ENCODE measurements at regions of chr1 and their contacts with region 1.

Region 1: GRCh38 chr1:173429471-173430402 is 47.4 kb upstream of the PRDX6 start:
- DNase-seq: peak; percentile 89 to 95 (median 91)
- ATAC-seq: peak; percentile 92 to 98 (median 98)
- H3K4me3 ChIP-seq: peak overlapping the region in 9 of 12 donors; percentile 22 to 42 (median 36)
- H3K27ac ChIP-seq: peak overlapping the region; percentile 79 to 94 (median 87)
- H3K4me1 ChIP-seq: peaks cover 0 to 36% (median 26%) of the 10 kb centered on the region in 12 donors
- H3K27me3 ChIP-seq: no peaks in the 10 kb centered on the region
- CTCF ChIP-seq: peak; percentile 40 to 77 (median 64)
- POLR2A ChIP-seq: peak in 1 of 2 donors; percentile 29

Region 2: GRCh38 chr1:172745014-172745413 is 684.7 kb before region 1 on chr1:
- intact Hi-C with region 1: loop called in 2 of 10 experiments (anchors 10 kb)
- DNase-seq: no peak
- ATAC-seq: peak; percentile 50 to 82 (median 78)
- H3K4me3 ChIP-seq: no peak overlapping the region
- H3K27ac ChIP-seq: no peak overlapping the region
- H3K4me1 ChIP-seq: peaks cover 0 to 26% (median 3%) of the 10 kb centered on the region in 12 donors
- H3K27me3 ChIP-seq: peaks cover 0 to 15% (median 0%) of the 10 kb centered on the region in 9 donors
- CTCF ChIP-seq: peak; percentile 25 to 64 (median 56)
- POLR2A ChIP-seq: no peak

Region 3: DNA sequence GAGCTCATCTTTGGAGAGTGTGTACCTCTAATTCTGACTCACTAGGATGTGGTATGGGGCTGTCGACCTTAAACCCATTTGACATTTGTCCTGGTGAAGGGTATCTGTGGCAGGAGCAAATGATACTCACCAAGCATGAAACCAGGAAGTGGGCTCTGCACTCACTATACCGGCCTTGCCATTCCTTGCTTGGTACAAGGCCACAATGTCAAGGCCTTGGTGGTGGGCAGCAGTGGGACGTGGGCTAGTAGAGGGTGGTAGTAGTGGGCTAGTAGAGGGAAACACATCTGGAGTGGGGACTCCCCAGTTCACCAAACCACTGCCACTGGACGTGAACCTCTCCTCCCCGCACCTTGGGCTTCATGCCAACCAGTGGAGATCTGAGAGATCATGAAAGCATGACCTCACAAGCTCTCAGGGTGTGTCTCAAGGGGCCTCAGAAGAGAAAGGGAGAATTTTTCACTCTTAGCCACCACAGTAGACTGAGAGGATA is 234.1 kb before region 1 on chr1:
- intact Hi-C with region 1: no loop called
- DNase-seq: no peak
- ATAC-seq: no peak
- H3K4me3 ChIP-seq: no peak overlapping the region
- H3K27ac ChIP-seq: no peak overlapping the region
- H3K4me1 ChIP-seq: peaks cover 0 to 12% (median 7%) of the 10 kb centered on the region in 12 donors
- H3K27me3 ChIP-seq: no peaks in the 10 kb centered on the region
- CTCF ChIP-seq: no peak
- POLR2A ChIP-seq: no peak

Region 4: DNA sequence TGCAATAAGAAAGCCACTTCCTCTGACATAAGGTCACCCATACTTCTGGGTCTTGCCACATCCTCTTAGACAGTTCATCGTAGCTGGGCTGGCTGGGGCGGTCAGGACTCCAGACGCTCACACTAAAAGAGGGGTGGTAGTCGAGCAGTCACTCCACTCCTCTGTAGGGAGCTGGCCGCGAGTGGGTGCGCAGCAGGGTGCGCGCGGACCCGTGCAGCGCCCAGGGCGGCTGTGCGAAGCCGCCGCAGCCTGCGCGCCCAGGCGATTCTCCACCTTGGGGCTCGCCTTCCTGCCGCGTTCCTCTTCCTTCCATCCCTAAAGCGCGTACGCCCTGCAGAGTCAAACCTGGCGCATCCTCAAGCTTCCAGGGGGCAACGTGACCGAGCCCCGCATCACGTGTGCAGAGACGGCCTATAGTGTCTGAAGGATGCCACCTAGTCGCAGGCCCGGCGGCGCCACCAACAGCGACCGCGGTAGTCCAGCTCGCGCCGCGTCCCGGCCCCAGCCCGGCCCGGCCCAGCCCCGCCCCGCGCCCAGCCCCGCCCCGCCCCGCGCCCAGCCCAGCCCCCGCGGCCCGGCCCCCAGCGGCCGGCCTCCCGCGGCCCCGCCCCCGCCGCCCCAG is 47.0 kb after region 1 on chr1:
- intact Hi-C with region 1: loop called in 9 of 10 experiments (anchors 1 to 10 kb)
- DNase-seq: peak; percentile 92 to 97 (median 94)
- ATAC-seq: peak; percentile 88 to 92 (median 91)
- H3K4me3 ChIP-seq: peak overlapping the region; percentile 52 to 96 (median 79)
- H3K27ac ChIP-seq: peak overlapping the region; percentile 66 to 99 (median 96)
- H3K4me1 ChIP-seq: peaks cover 0 to 61% (median 50%) of the 10 kb centered on the region in 12 donors
- H3K27me3 ChIP-seq: no peaks in the 10 kb centered on the region
- CTCF ChIP-seq: peak in 4 of 12 donors; percentile 15 to 32 (median 24)
- POLR2A ChIP-seq: peak in 1 of 2 donors; percentile 30

Region 5: GRCh38 chr1:173489149-173489934 is 59.6 kb after region 1 on chr1:
- intact Hi-C with region 1: no loop called
- DNase-seq: no peak
- ATAC-seq: peak in 1 of 4 donors; percentile 13
- H3K4me3 ChIP-seq: no peak overlapping the region
- H3K27ac ChIP-seq: no peak overlapping the region
- H3K4me1 ChIP-seq: no peaks in the 10 kb centered on the region
- H3K27me3 ChIP-seq: no peaks in the 10 kb centered on the region
- CTCF ChIP-seq: no peak
- POLR2A ChIP-seq: no peak

Region 6: DNA sequence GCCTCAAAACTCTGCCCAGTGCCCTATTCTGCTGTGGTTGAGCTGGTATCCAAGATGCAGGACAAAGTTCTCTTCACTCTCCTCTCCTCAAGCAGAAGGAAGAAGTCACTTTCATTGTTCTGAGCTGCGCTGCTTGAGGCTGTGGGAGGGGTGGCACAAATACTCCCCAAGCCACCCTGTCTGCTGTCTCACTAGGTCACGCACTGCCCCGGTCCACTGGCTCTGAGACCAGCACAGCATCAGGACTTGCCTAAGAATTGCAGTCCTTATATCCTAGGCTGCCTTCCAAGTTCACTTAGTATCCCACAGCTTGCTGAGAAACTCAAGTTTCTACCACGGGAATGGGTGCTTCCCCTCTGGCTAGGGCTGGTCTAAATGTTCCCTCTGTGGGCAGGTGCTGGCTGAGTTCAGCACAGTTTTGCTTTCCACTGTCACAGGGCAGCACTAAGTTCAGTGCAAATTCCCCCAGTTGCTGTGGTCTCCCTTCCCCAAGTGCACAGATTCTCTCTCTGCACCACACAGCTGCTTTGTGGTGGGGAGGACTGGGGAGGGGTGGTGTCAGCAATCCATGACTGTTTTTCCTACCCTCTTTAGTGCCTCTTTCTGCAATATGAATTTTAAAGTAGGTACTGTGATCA is 140.8 kb after region 1 on chr1:
- intact Hi-C with region 1: no loop called
- DNase-seq: no peak
- ATAC-seq: no peak
- H3K4me3 ChIP-seq: no peak overlapping the region
- H3K27ac ChIP-seq: no peak overlapping the region
- H3K4me1 ChIP-seq: no peaks in the 10 kb centered on the region
- H3K27me3 ChIP-seq: no peaks in the 10 kb centered on the region
- CTCF ChIP-seq: no peak
- POLR2A ChIP-seq: no peak

Region 7: GRCh38 chr1:173603056-173603620 is 173.4 kb after region 1 on chr1 and contains the start of gene SLC9C2:
- intact Hi-C with region 1: loop called in 1 of 10 experiments (anchors 10 kb)
- DNase-seq: peak in 1 of 5 donors; percentile 28
- ATAC-seq: peak in 3 of 4 donors; percentile 45 to 86 (median 63)
- H3K4me3 ChIP-seq: peak within 1 kb of the TSS; percentile 7 to 56 (median 46)
- H3K27ac ChIP-seq: peak within 1 kb of the TSS in 10 of 12 donors; percentile 8 to 64 (median 40)
- H3K4me1 ChIP-seq: peaks cover 0 to 11% (median 0%) of the 10 kb centered on the region in 12 donors
- H3K27me3 ChIP-seq: no peaks in the 10 kb centered on the region
- CTCF ChIP-seq: no peak
- POLR2A ChIP-seq: no peak
- total RNA-seq, gene SLC9C2: 0.09 to 1.8 (median 0.17) TPM in 3 of 9 donors, not detected in the others

Region 8: GRCh38 chr1:173714759-173715537 is 285.2 kb after region 1 on chr1 and contains the start of gene KLHL20:
- intact Hi-C with region 1: loop called in 9 of 10 experiments (anchors 2 to 10 kb)
- DNase-seq: peak; percentile 81 to 83 (median 82)
- ATAC-seq: peak; percentile 96 to 99 (median 99)
- H3K4me3 ChIP-seq: peak within 1 kb of the TSS; percentile 73 to 95 (median 81)
- H3K27ac ChIP-seq: peak within 1 kb of the TSS; percentile 76 to 95 (median 90)
- H3K4me1 ChIP-seq: peaks cover 0 to 30% (median 19%) of the 10 kb centered on the region in 12 donors
- H3K27me3 ChIP-seq: peaks cover 0 to 13% (median 0%) of the 10 kb centered on the region in 9 donors
- CTCF ChIP-seq: peak in 3 of 12 donors; percentile 18 to 32 (median 21)
- POLR2A ChIP-seq: peak in 1 of 2 donors; percentile 40
- total RNA-seq, gene KLHL20: 14.5 to 20.1 (median 18.3) TPM

Region 9: DNA sequence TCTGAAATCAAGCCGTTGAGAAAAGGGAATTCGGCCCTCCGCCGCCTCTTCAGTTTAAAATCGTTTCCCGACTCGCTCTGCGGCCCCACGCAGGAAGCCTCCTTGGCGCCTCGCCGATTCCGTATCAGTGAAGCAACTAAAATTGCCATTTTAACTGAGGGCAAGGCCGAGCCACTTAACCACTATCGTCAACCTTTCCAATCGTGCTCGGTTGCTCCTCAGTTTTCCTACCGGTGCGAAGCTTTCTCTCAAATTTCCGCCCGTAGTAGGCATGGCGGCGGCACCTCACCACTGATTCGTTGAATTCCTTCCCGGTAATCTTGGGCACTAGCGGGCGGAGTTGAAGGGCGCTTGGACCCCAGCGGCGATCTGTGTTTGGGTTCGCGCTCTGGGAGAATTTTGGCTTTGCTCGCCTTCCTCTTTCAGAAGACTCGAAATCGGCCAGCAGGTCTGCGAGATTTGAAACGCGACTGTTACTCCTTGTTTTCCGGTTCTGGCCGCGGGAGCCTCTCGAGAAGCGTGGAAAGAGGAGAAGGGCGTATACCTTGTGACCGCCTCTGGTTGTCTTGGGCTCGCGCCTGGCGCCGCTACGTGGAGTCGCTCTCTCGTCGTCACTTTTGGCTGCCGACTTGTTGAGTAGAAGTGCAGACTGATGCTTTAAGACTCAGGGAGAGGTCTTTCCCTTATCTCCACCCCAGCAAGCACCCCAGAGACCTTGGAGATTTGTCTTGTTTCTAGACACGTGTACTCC is 394.8 kb after region 1 on chr1 and contains the starts of genes CENPL and DARS2:
- intact Hi-C with region 1: loop called (anchors 1 to 5 kb)
- DNase-seq: peak; percentile 96 to 99 (median 96)
- ATAC-seq: peak; percentile 98 to 99 (median 99)
- H3K4me3 ChIP-seq: peak within 1 kb of the TSS; percentile 58 to 98 (median 78)
- H3K27ac ChIP-seq: peak within 1 kb of the TSS; percentile 87 to 97 (median 93)
- H3K4me1 ChIP-seq: peaks cover 0 to 29% (median 8%) of the 10 kb centered on the region in 12 donors
- H3K27me3 ChIP-seq: no peaks in the 10 kb centered on the region
- CTCF ChIP-seq: no peak
- POLR2A ChIP-seq: peak in 1 of 2 donors; percentile 21
- total RNA-seq, gene CENPL: 1.7 to 5.8 (median 3.5) TPM
- total RNA-seq, gene DARS2: 10.9 to 25.1 (median 15.9) TPM

Region 10: GRCh38 chr1:174074757-174075156 is 645.0 kb after region 1 on chr1:
- intact Hi-C with region 1: loop called in 2 of 10 experiments (anchors 10 kb)
- DNase-seq: no peak
- ATAC-seq: no peak
- H3K4me3 ChIP-seq: no peak overlapping the region
- H3K27ac ChIP-seq: no peak overlapping the region
- H3K4me1 ChIP-seq: peaks cover 0 to 2% (median 0%) of the 10 kb centered on the region in 12 donors
- H3K27me3 ChIP-seq: no peaks in the 10 kb centered on the region
- CTCF ChIP-seq: peak in 11 of 12 donors; percentile 18 to 62 (median 43)
- POLR2A ChIP-seq: no peak

Measured in heart left ventricle (tissue), 16 donors.